ENCODE measurements at regions of chr6 and their contacts with region 1.

Region 1: GRCh38 chr6:142926494-142927270 is 18.3 kb downstream of the HIVEP2 start:
- DNase-seq: peak; percentile 93
- H3K4me3 ChIP-seq: peak overlapping the region; percentile 42 to 63 (median 58)
- H3K27ac ChIP-seq: peak overlapping the region; percentile 76 to 91 (median 87)
- H3K4me1 ChIP-seq: peaks cover 0 to 16% (median 9%) of the 10 kb centered on the region in 4 donors
- H3K27me3 ChIP-seq: no peaks in the 10 kb centered on the region
- CTCF ChIP-seq: no peak
- EP300 ChIP-seq: no peak
- POLR2A ChIP-seq: no peak

Region 2: DNA sequence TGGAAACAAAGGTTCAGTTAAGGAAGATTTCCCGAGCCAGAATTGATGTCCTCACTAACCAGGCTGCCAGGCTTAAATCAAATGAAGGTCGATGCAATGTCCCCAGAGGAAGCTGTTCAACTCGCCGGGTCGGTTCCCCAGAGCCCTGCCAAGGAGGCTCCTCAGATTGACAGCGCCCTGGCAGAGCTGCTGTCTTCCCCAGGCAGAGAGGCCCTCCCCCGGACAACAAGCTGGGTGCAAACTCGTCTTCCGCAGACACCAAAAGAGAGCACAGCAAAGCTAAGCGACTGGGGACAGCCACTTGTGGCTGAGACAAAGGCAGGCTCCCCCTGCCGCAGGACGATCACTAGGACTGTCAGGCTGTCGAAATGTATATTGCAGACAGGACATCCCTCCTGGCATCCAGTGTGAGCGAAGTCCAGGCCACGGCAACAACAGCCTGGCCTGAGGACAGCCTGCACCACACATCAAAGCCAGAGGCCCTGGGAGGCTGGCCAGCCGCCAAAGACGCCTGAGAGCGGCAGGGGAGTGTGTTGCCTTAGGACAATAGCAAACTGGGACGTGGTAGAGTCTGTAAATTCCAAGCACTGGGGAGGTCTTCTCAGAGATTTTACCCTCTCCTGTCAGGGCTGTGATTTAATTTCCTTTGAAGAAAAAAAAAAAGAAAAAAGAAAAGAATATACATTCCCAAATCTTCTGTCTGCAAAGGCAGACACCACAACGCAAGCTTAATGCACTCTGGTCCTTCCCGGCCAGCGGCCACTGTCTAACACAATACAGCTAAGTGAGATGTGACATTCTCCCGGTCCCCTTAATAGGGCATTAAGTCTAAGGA is 80.8 kb before region 1 on chr6:
- intact Hi-C with region 1: loop called (anchors 5 kb)
- DNase-seq: peak; percentile 91
- H3K4me3 ChIP-seq: peak overlapping the region in 3 of 4 donors; percentile 33 to 43 (median 34)
- H3K27ac ChIP-seq: peak overlapping the region; percentile 70 to 81 (median 78)
- H3K4me1 ChIP-seq: peaks cover 0 to 70% (median 41%) of the 10 kb centered on the region in 4 donors
- H3K27me3 ChIP-seq: no peaks in the 10 kb centered on the region
- CTCF ChIP-seq: no peak
- EP300 ChIP-seq: no peak
- POLR2A ChIP-seq: no peak

Region 3: DNA sequence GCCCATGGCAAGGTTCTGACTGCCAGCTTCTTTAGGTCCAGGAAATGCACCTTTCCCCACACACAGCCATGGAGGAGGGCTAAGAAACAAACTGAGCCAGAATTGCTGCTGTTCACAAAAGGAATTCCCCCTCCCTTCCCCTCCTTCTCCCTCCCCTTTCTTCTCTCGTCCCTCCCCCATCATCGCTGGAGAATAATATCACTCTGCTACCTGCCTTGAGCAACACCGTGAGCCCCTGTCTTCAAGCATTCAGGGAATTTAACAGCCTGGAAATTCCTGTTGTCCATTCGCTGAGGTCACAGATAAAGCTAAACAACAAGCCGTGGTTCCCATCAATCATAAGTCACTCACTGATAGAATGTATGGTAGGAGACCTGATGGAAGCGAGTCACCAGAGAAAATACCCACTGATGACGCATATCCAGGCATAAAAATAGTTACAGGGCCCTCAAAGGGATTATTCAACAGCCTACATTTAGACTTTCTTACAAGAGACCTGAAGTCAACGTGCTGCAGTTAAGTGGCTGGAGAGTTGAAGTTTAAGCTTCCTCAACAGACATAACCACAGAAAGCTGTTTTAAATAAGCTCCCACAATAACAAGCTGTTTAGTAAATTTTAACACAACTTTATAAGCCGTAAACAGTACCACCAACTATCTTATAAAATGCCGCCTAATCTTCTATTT is 41.4 kb before region 1 on chr6:
- intact Hi-C with region 1: loop called (anchors 5 kb)
- DNase-seq: no peak
- H3K4me3 ChIP-seq: peak overlapping the region; percentile 16 to 43 (median 35)
- H3K27ac ChIP-seq: peak overlapping the region in 3 of 4 donors; percentile 54 to 66 (median 55)
- H3K4me1 ChIP-seq: peaks cover 0 to 39% (median 28%) of the 10 kb centered on the region in 4 donors
- H3K27me3 ChIP-seq: no peaks in the 10 kb centered on the region
- CTCF ChIP-seq: no peak
- EP300 ChIP-seq: peak in 3 of 4 donors; percentile 44 to 81 (median 60)
- POLR2A ChIP-seq: no peak

Region 4: DNA sequence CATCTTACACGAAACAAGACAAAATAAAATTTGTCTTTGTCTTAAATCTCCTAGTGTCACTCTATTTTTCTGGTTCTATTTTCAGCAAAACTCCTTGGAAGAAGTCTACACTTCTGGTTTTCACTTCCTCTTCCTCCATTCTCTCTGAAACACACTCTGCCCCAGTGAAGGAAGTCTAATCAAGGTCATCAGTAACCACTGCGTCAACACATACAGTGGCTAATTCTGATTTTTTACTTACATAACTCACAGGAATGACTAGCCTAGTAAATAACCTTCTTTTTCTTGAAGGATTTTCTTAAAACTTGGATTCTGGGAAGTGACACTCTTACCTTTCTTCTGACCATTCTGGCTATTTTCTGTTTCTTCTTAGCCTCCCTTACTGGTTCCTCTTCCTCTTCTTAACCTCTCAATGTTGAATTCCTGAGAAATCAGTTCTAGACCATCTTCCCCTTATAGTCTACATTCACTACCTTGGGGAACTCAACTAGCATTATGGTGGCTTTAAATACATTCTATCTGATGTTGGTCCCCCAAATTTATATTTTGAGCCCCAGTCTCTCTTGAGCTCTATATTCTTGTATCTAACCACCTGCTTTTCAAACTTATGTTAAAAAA is 171.5 kb after region 1 on chr6:
- intact Hi-C with region 1: no loop called
- DNase-seq: no peak
- H3K4me3 ChIP-seq: no peak overlapping the region
- H3K27ac ChIP-seq: no peak overlapping the region
- H3K4me1 ChIP-seq: no peaks in the 10 kb centered on the region
- H3K27me3 ChIP-seq: no peaks in the 10 kb centered on the region
- CTCF ChIP-seq: no peak
- EP300 ChIP-seq: no peak
- POLR2A ChIP-seq: no peak